ENCODE measurements at regions of chr7 and their contacts with region 1.

Region 1: DNA sequence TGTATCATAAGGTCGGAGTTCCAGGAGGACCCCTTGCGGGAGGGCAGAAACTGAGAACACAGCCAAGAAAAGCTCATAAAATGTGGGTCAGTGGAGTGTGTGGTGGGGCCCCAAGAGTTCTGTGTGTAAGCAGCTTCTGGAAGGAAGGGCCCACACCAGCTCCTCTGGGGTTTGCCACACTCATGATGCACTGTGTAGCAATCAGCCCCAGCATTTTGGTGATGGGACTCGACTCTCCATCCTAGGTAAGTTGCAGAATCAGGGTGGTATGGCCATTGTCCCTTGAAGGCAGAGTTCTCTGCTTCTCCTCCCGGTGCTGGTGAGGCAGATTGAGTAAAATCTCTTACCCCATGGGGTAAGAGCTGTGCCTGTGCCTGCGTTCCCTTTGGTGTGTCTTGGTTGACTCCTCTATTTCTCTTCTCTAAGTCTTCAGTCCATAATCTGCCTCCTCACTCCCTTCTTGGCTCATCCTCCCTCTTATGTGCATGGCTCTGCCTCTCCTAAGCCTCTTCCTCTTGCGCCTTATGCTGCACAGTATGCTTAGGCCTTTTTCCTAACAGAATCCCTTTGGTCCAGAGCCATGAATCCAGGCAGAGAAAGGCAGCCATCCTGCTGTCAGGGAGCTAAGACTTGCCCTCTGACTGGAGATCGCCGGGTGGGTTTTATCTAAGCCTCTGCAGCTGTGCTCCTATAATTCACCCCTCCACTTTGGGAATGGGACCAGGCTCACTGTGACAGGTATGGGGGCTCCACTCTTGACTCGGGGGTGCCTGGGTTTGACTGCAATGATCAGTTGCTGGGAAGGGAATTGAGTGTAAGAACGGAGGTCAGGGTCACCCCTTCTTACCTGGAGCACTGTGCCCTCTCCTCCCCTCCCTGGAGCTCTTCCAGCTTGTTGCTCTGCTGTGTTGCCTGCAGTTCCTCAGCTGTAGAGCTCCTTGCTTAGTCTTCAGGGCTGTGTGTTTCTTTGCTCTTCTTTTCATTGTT is 17.8 kb downstream of the PRSS2 start:
- DNase-seq: peak; percentile 24
- ATAC-seq: no peak
- H3K4me3 Mint-ChIP-seq: peak overlapping the region; percentile 90
- H3K27ac Mint-ChIP-seq: peak overlapping the region; percentile 99
- H3K4me1 Mint-ChIP-seq: peaks cover 22% of the 10 kb centered on the region
- H3K27me3 Mint-ChIP-seq: no peaks in the 10 kb centered on the region

Region 2: DNA sequence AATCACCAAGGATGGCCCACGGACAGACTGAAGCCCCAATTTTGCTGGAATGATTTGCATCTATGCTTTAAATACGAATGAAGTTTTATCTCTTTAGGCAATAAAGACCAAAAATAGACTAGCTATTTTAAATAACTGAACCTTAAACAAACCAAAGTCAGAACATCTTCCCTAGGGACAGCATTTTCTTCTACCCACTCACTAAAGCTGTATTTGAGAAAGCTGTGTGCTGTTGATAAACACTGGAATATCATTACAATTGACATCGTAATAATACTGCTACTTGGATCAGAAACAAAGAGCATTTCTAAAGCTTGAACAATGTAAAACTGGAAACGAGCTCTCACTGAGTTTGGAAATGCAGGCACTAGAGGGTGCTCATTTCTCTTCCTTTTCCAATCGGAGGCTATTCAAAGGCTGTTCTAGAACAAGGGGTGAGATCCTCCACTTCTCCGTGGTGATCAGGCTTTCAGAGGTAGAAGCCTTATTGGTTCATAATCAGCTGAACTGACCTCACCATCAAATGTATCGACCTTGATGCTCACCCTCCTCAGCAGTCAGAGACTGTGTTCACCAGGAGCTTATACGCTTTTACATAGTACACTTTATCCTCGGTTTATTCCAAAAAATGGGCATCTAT is 264.7 kb before region 1 on chr7:
- CTCF ChIA-PET with region 1: no interaction called
- POLR2A ChIA-PET with region 1: interaction called, 15 read pairs
- DNase-seq: no peak
- ATAC-seq: no peak
- H3K4me3 Mint-ChIP-seq: no peak overlapping the region
- H3K27ac Mint-ChIP-seq: no peak overlapping the region
- H3K4me1 Mint-ChIP-seq: peaks cover 9% of the 10 kb centered on the region
- H3K27me3 Mint-ChIP-seq: peaks cover 3% of the 10 kb centered on the region

Region 3: GRCh38 chr7:142711746-142712619 is 76.6 kb before region 1 on chr7:
- CTCF ChIA-PET with region 1: interaction called, 51 read pairs
- POLR2A ChIA-PET with region 1: interaction called, 20 read pairs
- DNase-seq: peak; percentile 70
- ATAC-seq: peak; percentile 83
- H3K4me3 Mint-ChIP-seq: peak overlapping the region; percentile 74
- H3K27ac Mint-ChIP-seq: peak overlapping the region; percentile 95
- H3K4me1 Mint-ChIP-seq: peaks cover 84% of the 10 kb centered on the region
- H3K27me3 Mint-ChIP-seq: no peaks in the 10 kb centered on the region

Region 4: GRCh38 chr7:142754681-142755575 is 33.7 kb before region 1 on chr7:
- CTCF ChIA-PET with region 1: no interaction called
- POLR2A ChIA-PET with region 1: no interaction called
- DNase-seq: no peak
- ATAC-seq: no peak
- H3K4me3 Mint-ChIP-seq: no peak overlapping the region
- H3K27ac Mint-ChIP-seq: no peak overlapping the region
- H3K4me1 Mint-ChIP-seq: no peaks in the 10 kb centered on the region
- H3K27me3 Mint-ChIP-seq: no peaks in the 10 kb centered on the region

Region 5: DNA sequence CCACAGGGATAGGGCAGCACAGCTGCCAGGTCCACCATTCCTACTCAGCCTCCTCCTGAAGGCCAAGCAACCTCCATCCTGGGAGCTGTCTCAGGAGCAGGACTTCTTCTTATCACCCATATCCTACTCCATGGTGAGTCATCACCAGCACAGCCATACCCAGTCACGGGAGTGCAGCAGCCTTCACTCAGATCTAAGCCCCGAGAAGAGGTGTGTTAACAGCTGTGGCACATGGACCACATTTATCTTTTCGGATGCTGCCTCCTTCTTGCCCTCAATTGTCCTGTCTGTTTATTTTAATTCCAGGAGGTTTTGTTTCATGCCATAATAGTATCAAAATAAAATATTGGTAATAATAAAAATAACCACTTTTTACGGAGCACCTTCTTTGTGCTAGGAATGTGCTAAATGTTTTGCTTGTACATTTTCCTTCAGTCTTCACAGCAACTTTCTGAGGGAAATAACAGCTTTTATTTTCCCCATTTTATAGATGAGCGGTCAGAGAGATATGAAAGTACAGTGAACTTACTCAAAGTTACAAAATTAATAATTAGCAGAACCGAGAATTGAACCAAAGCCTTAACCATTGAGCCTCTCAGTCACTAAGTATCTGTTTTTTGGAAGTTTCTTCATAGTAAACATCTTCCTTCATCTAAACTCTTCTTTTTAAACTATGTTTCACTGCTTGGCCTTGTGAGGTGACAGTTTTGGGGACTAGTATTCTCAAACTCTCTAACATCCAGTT is 176.1 kb after region 1 on chr7:
- CTCF ChIA-PET with region 1: no interaction called
- POLR2A ChIA-PET with region 1: no interaction called
- DNase-seq: no peak
- ATAC-seq: no peak
- H3K4me3 Mint-ChIP-seq: no peak overlapping the region
- H3K27ac Mint-ChIP-seq: no peak overlapping the region
- H3K4me1 Mint-ChIP-seq: no peaks in the 10 kb centered on the region
- H3K27me3 Mint-ChIP-seq: peaks cover 14% of the 10 kb centered on the region

Measured in activated CD8-positive, alpha-beta T cell treated with anti-CD3 and anti-CD28 coated beads, Interleukin-2, amount 10 ng/mL, durations not matched to agents 7 days and 5 days (primary cell).